BJ (cell line): ENCODE measurements at regions of chr6 and their contacts with region 1.

Region 1: DNA sequence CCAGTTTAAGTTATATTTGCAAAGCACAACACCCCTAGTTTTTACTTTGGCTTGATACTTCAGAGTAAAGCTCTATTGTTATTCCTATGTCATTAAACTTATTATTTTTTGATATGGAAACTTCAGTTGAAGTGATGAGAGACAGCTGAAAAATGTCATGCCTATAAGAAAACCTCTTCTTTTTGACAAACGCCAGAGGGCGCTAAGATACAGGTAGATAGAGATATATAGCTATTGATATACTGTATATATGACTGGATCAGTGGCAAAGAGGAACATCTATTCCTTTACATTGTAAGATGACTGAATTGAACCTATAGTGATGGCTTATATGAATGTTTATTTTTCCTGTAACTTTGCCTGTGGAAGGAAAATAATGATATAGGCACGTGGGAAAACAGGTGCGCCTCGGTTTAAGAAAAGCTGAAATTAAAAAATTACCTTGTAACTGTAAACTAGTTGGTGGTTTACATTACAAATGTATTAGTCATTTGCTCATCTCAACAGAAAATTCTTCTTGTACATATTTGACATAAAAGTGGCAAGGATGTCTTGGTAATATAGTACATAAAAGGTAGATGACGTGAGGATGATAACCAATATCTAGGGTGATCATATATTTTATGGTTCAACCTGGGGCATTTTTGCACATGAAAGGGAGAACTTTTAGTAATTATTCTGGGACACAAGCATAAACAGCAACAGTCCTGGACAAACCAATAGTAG is 74.1 kb downstream of the LAMA4 start:
- DNase-seq: no peak
- H3K4me3 ChIP-seq: no peak overlapping the region
- H3K27me3 ChIP-seq: no peaks in the 10 kb centered on the region
- CTCF ChIP-seq: peak; percentile 63

Region 2: GRCh38 chr6:112223070-112223861 is 43.0 kb after region 1 on chr6:
- CTCF ChIA-PET with region 1: interaction called, 10 read pairs
- POLR2A ChIA-PET with region 1: interaction called, 3 read pairs
- DNase-seq: peak; percentile 93
- H3K4me3 ChIP-seq: no peak overlapping the region
- H3K27me3 ChIP-seq: no peaks in the 10 kb centered on the region
- CTCF ChIP-seq: no peak

Region 3: DNA sequence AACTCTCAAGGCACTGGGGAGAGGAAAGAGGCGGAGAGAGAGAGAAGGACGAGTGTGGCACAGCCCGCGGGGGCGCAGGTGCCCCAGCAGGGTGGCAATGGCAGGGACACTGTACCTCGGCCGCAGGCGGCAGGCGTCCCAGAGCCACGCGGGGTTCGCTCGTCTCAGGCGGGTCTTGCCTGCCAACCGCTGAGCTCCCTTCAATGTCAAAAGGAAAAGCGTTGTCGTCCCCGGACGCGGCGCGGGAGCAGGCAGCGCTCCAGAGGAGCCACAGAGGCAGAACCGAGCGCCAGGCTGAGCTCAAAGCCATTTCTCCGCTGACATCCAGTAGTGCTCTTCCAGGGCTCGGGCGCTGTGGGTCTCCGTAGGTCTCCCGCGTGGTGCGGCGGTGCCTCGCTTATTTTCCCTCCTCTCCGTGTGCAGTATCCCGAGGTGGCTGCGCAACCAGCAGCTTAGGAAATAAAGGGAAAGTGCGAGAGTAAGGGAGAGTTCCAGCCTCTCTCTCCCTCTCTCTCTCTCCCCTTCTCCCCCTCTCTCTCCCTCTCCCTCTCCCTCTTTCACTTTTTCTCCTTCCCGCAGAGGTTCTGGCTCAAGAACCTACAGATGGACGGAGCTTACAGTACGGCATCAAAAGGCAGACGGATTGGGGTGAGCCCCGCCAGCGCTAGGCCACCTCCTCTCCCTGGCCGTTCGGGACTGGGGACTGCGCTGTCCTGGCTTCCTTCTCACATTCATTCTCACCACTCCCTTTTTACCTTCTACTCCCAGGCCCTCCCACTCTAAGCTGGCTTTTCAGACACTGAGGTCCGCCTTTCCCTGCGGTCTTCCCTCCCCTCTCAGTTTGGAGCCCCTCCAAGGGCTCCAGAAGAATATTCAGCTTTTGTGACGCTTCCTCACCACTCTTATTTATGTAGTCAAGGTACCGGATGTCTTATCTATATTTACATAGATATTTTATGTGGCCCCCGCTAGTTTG is 73.9 kb after region 1 on chr6 and contains the start of gene LAMA4:
- CTCF ChIA-PET with region 1: interaction called, 14 read pairs
- POLR2A ChIA-PET with region 1: no interaction called
- DNase-seq: no peak
- H3K4me3 ChIP-seq: peak within 1 kb of the TSS; percentile 52
- H3K27me3 ChIP-seq: no peaks in the 10 kb centered on the region
- CTCF ChIP-seq: no peak
- polyA plus RNA-seq, gene LAMA4: 268 and 301 TPM in 2 replicates

Region 4: GRCh38 chr6:112282221-112282620 is 102.0 kb after region 1 on chr6:
- CTCF ChIA-PET with region 1: interaction called, 12 read pairs
- POLR2A ChIA-PET with region 1: no interaction called
- DNase-seq: peak; percentile 83
- H3K4me3 ChIP-seq: no peak overlapping the region
- H3K27me3 ChIP-seq: no peaks in the 10 kb centered on the region; the same call in 1 of the 2 replicates
- CTCF ChIP-seq: peak; percentile 45

Region 5: GRCh38 chr6:112311950-112312547 is 131.8 kb after region 1 on chr6:
- CTCF ChIA-PET with region 1: interaction called, 21 read pairs
- POLR2A ChIA-PET with region 1: no interaction called
- DNase-seq: no peak
- H3K4me3 ChIP-seq: no peak overlapping the region
- H3K27me3 ChIP-seq: no peaks in the 10 kb centered on the region
- CTCF ChIP-seq: peak; percentile 63

Region 6: DNA sequence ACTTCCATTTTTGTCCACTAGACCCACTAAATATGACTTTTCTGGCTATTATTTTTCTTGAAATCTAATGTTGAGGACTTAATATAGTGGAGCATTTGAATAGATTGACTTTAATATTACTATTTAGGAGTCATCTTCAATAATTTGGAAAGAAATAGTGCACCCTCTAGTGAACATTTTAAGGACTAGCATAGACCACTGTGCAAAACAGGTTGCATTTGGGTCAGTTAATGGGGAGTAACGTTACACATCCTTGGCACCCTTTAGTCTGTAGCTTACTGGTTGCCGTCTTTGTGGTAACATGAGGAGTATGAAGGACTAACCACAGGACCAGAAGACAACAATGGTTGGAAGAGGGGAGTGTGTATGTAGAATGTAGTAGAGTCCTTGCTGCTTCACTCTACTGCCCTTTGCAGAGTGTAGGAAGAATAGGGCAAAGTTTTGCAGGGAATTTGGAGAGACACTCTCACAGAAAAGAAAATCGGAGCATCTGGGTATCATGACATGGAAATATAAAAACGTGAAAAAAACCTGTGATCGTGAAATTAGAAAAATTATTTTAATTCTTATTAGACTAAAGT is 192.1 kb after region 1 on chr6:
- CTCF ChIA-PET with region 1: interaction called, 30 read pairs
- POLR2A ChIA-PET with region 1: no interaction called
- DNase-seq: no peak
- H3K4me3 ChIP-seq: no peak overlapping the region
- H3K27me3 ChIP-seq: no peaks in the 10 kb centered on the region
- CTCF ChIP-seq: peak; percentile 62